Sciatic nerve (tissue), 2 donors: ENCODE measurements at regions of chrX and their contacts with region 1.

Region 1: GRCh38 chrX:101411984-101412383 is 4.0 kb downstream of the HNRNPH2 start:
- DNase-seq: no peak
- ATAC-seq: no peak

Region 2: GRCh38 chrX:101430457-101431078 is 18.6 kb after region 1 on chrX:
- intact Hi-C with region 1: loop called (anchors 1 kb)
- DNase-seq: no peak
- ATAC-seq: no peak

Region 3: DNA sequence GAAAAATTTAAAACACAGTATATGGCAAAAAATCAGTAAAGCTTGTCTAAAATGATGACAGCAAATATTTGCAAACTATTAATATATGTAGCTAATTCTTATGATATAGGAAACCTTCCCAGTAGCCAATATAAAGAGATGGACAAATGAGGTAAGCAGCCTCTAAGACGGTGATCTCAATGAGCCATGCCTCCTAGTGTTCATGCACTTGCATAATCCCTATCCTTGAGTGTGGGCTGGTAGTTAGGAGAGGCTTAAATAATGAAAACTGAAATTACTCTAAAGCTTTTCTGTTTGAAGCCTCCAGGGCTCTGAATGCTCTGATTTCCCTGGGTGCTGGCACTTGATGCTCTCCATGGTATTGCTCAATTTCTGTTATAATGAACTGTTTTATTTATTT is 48.7 kb after region 1 on chrX:
- intact Hi-C with region 1: no loop called
- DNase-seq: no peak
- ATAC-seq: no peak

Region 4: DNA sequence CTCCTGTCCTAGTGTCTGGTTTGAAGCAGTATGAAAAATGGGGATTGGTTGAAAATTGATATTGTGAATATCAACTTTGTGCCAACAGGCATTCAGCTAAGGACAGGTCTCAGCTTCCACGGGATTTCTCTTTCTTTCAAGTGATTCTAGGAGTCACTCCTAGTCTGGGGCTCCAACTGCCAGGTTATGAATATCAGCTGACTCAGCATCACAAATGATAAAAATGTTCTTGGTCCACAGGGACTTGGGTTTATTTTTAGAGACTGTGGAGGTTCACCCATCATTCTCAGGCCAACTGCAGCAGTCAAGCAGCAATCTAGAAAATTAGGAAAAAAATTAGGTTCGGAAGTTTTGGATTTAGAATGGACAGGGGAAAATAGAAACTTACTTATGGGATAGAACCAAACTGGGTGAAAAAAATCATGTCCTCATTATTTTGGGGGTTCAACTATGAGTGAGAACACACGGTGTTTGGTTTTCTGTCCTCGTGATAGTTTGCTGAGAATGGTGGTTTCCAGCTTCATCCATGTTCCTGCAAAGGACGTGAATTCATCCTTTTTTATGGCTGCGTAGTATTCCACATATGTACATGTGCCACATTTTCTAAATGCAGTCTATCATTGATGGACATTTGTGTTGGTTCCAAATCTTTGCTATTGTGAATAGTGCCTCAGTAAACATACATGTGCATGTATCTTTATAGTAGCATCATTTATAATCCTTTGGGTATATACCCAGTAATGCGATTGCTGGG is 774.2 kb after region 1 on chrX:
- intact Hi-C with region 1: no loop called
- DNase-seq: no peak
- ATAC-seq: no peak